Activated CD8-positive, alpha-beta T cell treated with anti-CD3 and anti-CD28 coated beads for 36 hours (primary cell): ENCODE measurements at regions of chr9 and their contacts with region 1.

Region 1: GRCh38 chr9:88578121-88579054 is 43.4 kb downstream of the NXNL2 start:
- DNase-seq: peak; percentile 77
- ATAC-seq: peak; percentile 70
- H3K4me3 Mint-ChIP-seq: peak overlapping the region; percentile 38
- H3K27ac Mint-ChIP-seq: no peak overlapping the region
- H3K4me1 Mint-ChIP-seq: peaks cover 3% of the 10 kb centered on the region
- H3K27me3 Mint-ChIP-seq: peaks cover 23% of the 10 kb centered on the region
- CTCF ChIP-seq: peak; percentile 98

Region 2: GRCh38 chr9:88173378-88173999 is 404.9 kb before region 1 on chr9:
- CTCF ChIA-PET with region 1: interaction called, 7 read pairs
- POLR2A ChIA-PET with region 1: no interaction called
- intact Hi-C with region 1: loop called (anchors 1 kb)
- DNase-seq: peak; percentile 78
- ATAC-seq: peak; percentile 70
- H3K4me3 Mint-ChIP-seq: no peak overlapping the region
- H3K27ac Mint-ChIP-seq: no peak overlapping the region
- H3K4me1 Mint-ChIP-seq: no peaks in the 10 kb centered on the region
- H3K27me3 Mint-ChIP-seq: peaks cover 5% of the 10 kb centered on the region
- CTCF ChIP-seq: peak; percentile 92